Heart left ventricle (tissue), 16 donors: ENCODE measurements at regions of chr3 and their contacts with region 1.

Region 1: DNA sequence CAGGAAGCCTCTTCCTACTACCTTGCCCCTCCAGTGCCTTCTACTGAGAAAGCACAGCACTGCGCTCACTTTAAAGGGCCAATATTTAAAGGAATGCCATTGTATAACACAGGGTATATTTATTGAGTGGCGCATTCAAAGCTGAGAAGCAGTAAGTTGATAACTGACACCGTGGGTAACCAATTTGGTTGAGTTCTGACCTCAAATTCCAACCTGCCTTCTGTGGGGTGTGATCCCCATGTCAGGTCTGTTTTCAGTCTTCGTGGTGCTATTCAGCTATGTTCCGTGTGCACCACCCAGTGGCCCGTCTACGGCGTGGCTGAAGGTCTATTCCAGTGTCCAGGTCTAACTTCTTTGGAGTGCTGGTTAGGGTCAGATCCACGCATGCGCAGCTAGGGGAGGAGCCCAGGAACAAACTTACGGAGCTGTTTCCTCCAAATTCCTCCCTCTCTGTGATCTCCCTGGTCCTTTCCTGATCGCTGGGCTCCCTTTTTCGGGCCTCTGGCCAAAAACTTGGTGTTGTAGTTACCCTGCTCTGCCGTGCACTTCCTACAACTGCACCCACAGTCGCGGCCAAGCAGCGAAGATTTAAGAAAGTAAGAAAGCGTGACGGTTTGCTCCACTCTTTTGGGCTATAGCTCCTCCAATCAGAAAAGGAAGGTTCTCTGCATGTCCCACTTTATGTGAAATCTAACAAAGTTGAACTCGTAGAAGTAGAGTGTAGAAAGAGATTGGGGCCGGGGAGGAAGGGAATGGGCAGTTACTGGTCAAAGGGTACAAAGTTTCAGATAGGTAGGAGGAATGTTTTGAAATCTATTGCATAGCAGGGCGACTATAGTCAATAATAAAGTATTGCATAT is 7.7 kb downstream of the LRRC2 start:
- DNase-seq: peak; percentile 77 to 92 (median 90)
- ATAC-seq: peak; percentile 68 to 91 (median 89)
- H3K4me3 ChIP-seq: peak overlapping the region in 10 of 12 donors; percentile 25 to 57 (median 48)
- H3K27ac ChIP-seq: peak overlapping the region; percentile 9 to 99 (median 63)
- H3K4me1 ChIP-seq: peaks cover 0 to 63% (median 15%) of the 10 kb centered on the region in 12 donors
- H3K27me3 ChIP-seq: no peaks in the 10 kb centered on the region
- CTCF ChIP-seq: peak; percentile 20 to 90 (median 62)
- POLR2A ChIP-seq: no peak

Region 2: DNA sequence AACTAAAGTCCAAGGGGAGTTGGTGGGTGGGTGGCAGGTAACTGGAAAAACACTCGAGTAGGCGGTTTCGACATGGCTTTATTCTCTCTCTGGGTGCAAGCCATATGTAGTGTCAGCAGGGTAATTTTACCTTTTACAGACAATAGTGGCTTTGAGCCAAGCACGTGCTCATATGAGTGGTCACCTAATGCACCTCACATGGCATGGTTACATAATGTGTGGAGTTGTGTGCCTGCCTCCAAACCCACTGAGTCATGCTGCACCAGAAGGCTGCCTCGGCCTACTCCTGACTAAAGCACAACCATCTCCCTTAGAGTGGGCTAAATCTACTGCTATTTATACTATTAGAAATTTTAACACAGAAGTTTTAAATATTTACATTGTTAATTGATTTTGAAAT is 134.8 kb before region 1 on chr3:
- intact Hi-C with region 1: no loop called
- DNase-seq: no peak
- ATAC-seq: no peak
- H3K4me3 ChIP-seq: no peak overlapping the region
- H3K27ac ChIP-seq: no peak overlapping the region
- H3K4me1 ChIP-seq: peaks cover 0 to 14% (median 0%) of the 10 kb centered on the region in 12 donors
- H3K27me3 ChIP-seq: no peaks in the 10 kb centered on the region
- CTCF ChIP-seq: no peak
- POLR2A ChIP-seq: no peak

Region 3: DNA sequence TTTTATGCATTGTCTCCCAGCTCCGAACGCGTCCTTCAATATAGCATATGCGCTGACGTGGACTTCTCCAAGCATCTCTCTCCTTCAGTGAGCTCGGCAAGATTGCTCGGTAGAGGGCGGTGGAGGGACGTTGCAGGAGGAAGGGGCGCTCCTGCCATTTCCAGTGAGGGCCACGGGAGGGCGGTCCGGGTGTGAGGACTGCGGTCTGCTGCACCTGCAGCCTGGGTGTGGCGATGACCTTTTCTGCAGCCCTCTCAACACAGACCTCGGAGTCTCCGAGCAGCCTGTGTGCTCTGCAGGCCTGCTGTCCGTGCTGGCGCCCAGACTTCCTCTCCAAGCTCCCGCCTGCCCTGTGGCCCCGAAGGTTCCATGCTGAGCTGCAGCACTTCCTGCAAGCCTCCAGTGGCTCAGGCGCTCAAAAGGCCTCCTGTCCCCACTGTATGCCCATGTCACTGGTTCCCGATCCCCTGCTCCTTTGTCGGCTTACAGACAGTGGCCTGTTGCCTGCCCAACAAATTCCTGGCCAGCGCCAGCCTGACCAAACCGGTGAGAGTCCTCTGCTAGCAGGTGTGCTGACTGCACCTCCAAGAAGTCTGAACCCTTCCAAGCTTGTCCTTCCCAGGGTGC is 69.6 kb before region 1 on chr3:
- intact Hi-C with region 1: loop called in 9 of 10 experiments (anchors 2 to 5 kb)
- DNase-seq: peak; percentile 88 to 95 (median 93)
- ATAC-seq: peak; percentile 79 to 94 (median 93)
- H3K4me3 ChIP-seq: peak overlapping the region in 2 of 12 donors; percentile 30
- H3K27ac ChIP-seq: peak overlapping the region in 1 of 12 donors; percentile 8
- H3K4me1 ChIP-seq: peaks cover 0 to 21% (median 2%) of the 10 kb centered on the region in 12 donors
- H3K27me3 ChIP-seq: no peaks in the 10 kb centered on the region
- CTCF ChIP-seq: peak; percentile 94 to 100 (median 98)
- POLR2A ChIP-seq: no peak

Region 4: GRCh38 chr3:46508850-46509591 is 49.4 kb before region 1 on chr3:
- intact Hi-C with region 1: no loop called
- DNase-seq: no peak
- ATAC-seq: no peak
- H3K4me3 ChIP-seq: no peak overlapping the region
- H3K27ac ChIP-seq: no peak overlapping the region
- H3K4me1 ChIP-seq: no peaks in the 10 kb centered on the region
- H3K27me3 ChIP-seq: peaks cover 0 to 3% (median 0%) of the 10 kb centered on the region in 9 donors
- CTCF ChIP-seq: no peak
- POLR2A ChIP-seq: no peak